ENCODE measurements at regions of chr14 and their contacts with region 1.

Region 1: DNA sequence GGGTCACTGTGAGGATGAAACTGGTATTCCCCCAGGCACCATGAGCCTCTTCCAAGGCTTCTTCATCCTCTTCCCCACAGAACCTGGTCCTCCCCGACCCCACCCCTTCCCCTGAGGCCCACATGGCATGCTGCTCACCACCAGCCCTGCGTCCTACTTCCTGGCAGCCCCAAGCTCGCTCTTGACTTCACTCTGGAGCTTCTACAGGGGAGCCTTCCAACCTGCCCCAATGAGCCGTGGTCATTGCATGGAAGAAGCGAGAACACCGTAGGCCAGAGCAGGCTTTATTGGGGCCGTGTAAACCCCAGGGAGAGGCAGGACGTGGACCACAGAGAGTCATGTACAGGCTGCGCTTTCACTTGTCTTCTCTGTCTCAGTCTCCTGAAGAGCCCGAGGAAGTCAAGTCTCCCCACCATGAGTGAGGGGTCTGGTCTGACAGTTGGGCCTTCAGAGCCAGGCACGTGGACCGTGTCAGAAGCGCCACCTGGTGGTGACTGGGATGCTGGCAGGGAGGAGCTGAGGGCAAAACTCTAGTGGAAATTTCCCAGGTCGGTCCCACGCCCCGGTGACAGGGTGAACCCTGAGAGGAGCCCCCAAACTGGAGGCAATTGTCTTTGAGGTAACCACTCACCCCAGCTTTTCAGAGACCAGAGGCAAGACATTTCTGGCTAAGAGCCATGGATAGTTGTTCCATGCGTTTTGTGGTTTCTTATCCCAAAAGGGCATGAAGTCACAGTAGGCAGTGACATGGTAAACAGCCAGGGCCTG is 17.5 kb downstream of the RPS6KL1 start:
- DNase-seq: peak; percentile 36
- ATAC-seq: peak; percentile 59
- H3K4me3 ChIP-seq: no peak overlapping the region
- H3K27ac ChIP-seq: no peak overlapping the region
- H3K4me1 ChIP-seq: peaks cover 5% of the 10 kb centered on the region; the same call in 1 of the 2 replicates
- H3K27me3 ChIP-seq: no peaks in the 10 kb centered on the region
- CTCF ChIP-seq: peak; percentile 96
- EP300 ChIP-seq: 0 out of 4 replicates have a peak, but pooled peaks of 1 of the 2 experiments have one; percentile 25
- POLR2A ChIP-seq: no peak
- RAD21 ChIP-seq: peak; percentile 80

Region 2: GRCh38 chr14:74860906-74861733 is 44.4 kb before region 1 on chr14:
- CTCF ChIA-PET with region 1: interaction called, 47 read pairs
- POLR2A ChIA-PET with region 1: interaction called, 11 read pairs
- in situ Hi-C with region 1: loop called (anchors 5 kb)
- intact Hi-C with region 1: loop called (anchors 1 kb)
- DNase-seq: peak; percentile 77
- ATAC-seq: peak; percentile 89
- H3K4me3 ChIP-seq: no peak overlapping the region
- H3K27ac ChIP-seq: no peak overlapping the region
- H3K4me1 ChIP-seq: peaks cover 2% of the 10 kb centered on the region
- H3K27me3 ChIP-seq: 0 out of 5 replicates have a peak, but pooled peaks cover 0 to 2% of the 10 kb centered on the region in 2 experiments
- CTCF ChIP-seq: peak; percentile 92
- EP300 ChIP-seq: no peak
- POLR2A ChIP-seq: no peak
- RAD21 ChIP-seq: peak; percentile 70